T-cell (primary cell): ENCODE measurements at regions of chr2 and their contacts with region 1.

Region 1: GRCh38 chr2:189762551-189763298 is at the start of gene OSGEPL1:
- DNase-seq: peak; percentile 81 to 96 (median 92)
- ATAC-seq: peak; percentile 93 to 95 (median 94)
- H3K4me3 ChIP-seq: peak within 1 kb of the TSS; percentile 94 to 98
- H3K4me3 Mint-ChIP-seq: peak within 1 kb of the TSS; percentile 92 to 98 (median 93)
- H3K27ac ChIP-seq: peak within 1 kb of the TSS; percentile 95
- H3K27ac Mint-ChIP-seq: peak within 1 kb of the TSS; percentile 96 to 98
- H3K4me1 ChIP-seq: peaks cover 5 to 10% of the 10 kb centered on the region in 2 experiments
- H3K4me1 Mint-ChIP-seq: peaks cover 11 to 13% (median 11%) of the 10 kb centered on the region in 3 donors
- H3K27me3 ChIP-seq: no peaks in the 10 kb centered on the region
- H3K27me3 Mint-ChIP-seq: no peaks in the 10 kb centered on the region
- total RNA-seq, gene OSGEPL1: 5.5 to 15.3 (median 13.9) TPM

Region 2: DNA sequence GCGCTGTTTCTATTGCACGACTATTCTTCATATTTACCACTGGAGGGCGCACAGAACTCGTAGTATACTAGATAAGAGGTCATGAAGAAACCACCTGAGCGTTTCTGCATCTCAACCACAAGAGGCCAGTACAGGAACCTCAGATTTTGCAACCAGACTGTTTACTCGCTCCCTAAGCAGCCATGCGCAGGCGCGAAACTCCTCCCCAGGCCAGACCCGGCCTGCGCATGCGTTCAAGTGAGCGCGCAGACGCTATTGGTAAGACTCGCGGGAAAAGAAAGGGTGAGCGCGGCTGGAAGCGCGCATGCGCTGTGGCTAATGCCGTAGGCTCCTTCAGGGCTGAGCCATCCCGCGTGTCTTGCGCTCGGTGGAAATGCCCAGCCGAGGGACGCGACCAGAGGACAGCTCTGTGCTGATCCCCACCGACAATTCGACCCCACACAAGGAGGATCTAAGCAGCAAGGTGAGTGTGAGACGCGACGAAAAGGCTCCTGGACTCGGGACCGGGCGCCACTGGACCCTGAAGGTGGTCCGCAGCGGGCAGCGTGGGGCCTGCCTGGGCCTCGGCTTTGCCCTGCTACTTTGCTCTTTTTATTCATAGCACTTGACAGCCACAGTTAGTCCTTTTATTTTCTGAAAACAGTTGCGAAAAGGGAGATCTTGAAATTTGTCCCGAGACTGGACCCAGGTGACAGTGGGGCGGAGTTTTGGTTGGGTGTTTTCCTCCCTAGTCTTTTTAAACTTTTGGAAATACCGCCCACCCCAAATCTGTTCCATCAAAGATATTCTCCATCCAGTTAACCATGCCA is 101.4 kb before region 1 on chr2 and contains the start of gene ASNSD1:
- CTCF ChIA-PET with region 1: interaction called, 7 to 41 read pairs
- POLR2A ChIA-PET with region 1: interaction called in 1 of 2 experiments, 8 read pairs
- DNase-seq: peak; percentile 94 to 100 (median 99)
- ATAC-seq: peak; percentile 87 to 93 (median 88)
- H3K4me3 ChIP-seq: peak within 1 kb of the TSS; percentile 93 to 98
- H3K4me3 Mint-ChIP-seq: no peak within 1 kb of the TSS
- H3K27ac ChIP-seq: peak within 1 kb of the TSS; percentile 92
- H3K27ac Mint-ChIP-seq: no peak within 1 kb of the TSS
- H3K4me1 ChIP-seq: peaks cover 27 to 40% of the 10 kb centered on the region in 2 experiments
- H3K4me1 Mint-ChIP-seq: peaks cover 54 to 62% (median 55%) of the 10 kb centered on the region in 3 donors
- H3K27me3 ChIP-seq: no peaks in the 10 kb centered on the region
- H3K27me3 Mint-ChIP-seq: no peaks in the 10 kb centered on the region
- total RNA-seq, gene ASNSD1: 31.7 to 43.8 (median 35.9) TPM

Region 3: DNA sequence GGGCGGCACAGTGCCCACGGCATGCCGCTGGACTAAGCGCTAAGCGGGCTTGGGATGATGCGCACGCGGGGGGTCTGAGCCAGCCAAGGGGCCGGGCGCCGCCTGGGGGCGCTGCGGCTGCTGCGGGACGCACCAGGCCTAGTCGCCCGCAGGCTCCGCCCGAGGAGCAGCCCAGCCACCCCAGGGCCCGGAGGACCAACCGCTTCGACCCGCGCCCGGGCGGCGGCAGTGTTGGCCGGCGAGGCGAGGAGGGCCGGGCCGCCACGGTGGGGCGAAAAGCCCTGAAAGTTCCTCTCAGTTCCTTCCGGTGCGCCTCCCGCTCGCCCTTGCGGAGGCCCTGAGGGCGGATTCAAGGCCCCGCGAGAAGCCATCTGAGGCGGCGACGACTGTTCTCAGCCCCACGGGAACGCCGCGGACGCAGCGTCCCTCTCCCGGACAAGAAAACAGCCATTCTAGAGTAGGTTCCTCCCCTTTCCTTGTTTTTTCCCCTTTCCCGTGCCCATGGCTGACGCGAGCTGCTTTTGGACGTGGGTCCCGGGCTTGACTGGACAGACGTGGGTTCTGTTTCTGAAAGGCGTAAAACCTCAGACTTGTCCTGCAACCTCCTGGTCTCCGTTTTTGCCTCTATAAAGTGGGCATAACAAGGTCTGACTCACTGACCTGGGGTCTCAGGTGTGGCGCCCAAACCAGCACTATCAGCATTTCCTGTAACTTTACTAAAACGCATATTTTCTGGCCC is 88.2 kb before region 1 on chr2 and contains the start of gene ANKAR:
- CTCF ChIA-PET with region 1: interaction called, 6 to 36 read pairs
- POLR2A ChIA-PET with region 1: interaction called in 1 of 2 experiments, 8 read pairs
- DNase-seq: peak; percentile 54 to 89 (median 72)
- ATAC-seq: peak; percentile 95 to 97 (median 96)
- H3K4me3 ChIP-seq: peak within 1 kb of the TSS; percentile 67 to 96
- H3K4me3 Mint-ChIP-seq: peak within 1 kb of the TSS; percentile 91 to 95 (median 93)
- H3K27ac ChIP-seq: peak within 1 kb of the TSS; percentile 88
- H3K27ac Mint-ChIP-seq: peak within 1 kb of the TSS; percentile 97 to 99
- H3K4me1 ChIP-seq: peaks cover 3 to 21% of the 10 kb centered on the region in 2 experiments
- H3K4me1 Mint-ChIP-seq: peaks cover 30 to 44% (median 41%) of the 10 kb centered on the region in 3 donors
- H3K27me3 ChIP-seq: no peaks in the 10 kb centered on the region
- H3K27me3 Mint-ChIP-seq: no peaks in the 10 kb centered on the region
- total RNA-seq, gene ANKAR: 12.5 to 14.9 (median 12.9) TPM

Region 4: DNA sequence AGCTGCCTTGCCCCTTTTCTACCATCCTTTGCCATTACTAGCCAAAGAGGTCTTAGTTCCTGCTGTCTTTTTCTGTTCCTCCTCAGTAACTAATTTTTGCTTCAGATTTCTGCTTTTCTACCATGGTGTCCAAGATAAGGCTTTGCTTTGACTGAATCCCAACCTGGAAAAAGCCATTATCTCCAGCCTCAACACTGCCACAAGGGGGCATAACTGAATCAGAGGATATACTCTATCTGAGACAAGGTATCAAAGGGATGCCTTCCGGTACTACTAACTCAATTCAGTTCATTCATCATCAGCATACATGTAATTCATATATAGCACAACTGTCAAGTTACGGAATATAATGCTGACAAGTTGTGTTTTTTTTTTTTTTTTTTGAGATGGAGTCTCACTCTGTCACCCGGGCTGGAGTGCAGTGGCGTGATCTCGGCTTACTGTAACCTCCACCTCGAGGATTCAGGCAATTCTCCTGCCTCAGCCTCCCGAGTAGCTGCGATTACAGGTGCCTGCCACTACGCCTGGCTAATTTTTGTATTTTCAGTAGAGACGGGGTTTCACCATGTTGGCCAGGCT is 11.6 kb before region 1 on chr2:
- CTCF ChIA-PET with region 1: interaction called, 8 to 27 read pairs
- POLR2A ChIA-PET with region 1: interaction called in 1 of 2 experiments, 3 read pairs
- DNase-seq: peak in 25 of 35 experiments; percentile 4 to 66 (median 28)
- ATAC-seq: peak; percentile 60 to 85 (median 66)
- H3K4me3 ChIP-seq: no peak overlapping the region
- H3K4me3 Mint-ChIP-seq: no peak overlapping the region
- H3K27ac ChIP-seq: no peak overlapping the region
- H3K27ac Mint-ChIP-seq: no peak overlapping the region
- H3K4me1 ChIP-seq: no peaks in the 10 kb centered on the region
- H3K4me1 Mint-ChIP-seq: peaks cover 0 to 3% (median 1%) of the 10 kb centered on the region in 3 donors
- H3K27me3 ChIP-seq: no peaks in the 10 kb centered on the region
- H3K27me3 Mint-ChIP-seq: no peaks in the 10 kb centered on the region

Region 5: DNA sequence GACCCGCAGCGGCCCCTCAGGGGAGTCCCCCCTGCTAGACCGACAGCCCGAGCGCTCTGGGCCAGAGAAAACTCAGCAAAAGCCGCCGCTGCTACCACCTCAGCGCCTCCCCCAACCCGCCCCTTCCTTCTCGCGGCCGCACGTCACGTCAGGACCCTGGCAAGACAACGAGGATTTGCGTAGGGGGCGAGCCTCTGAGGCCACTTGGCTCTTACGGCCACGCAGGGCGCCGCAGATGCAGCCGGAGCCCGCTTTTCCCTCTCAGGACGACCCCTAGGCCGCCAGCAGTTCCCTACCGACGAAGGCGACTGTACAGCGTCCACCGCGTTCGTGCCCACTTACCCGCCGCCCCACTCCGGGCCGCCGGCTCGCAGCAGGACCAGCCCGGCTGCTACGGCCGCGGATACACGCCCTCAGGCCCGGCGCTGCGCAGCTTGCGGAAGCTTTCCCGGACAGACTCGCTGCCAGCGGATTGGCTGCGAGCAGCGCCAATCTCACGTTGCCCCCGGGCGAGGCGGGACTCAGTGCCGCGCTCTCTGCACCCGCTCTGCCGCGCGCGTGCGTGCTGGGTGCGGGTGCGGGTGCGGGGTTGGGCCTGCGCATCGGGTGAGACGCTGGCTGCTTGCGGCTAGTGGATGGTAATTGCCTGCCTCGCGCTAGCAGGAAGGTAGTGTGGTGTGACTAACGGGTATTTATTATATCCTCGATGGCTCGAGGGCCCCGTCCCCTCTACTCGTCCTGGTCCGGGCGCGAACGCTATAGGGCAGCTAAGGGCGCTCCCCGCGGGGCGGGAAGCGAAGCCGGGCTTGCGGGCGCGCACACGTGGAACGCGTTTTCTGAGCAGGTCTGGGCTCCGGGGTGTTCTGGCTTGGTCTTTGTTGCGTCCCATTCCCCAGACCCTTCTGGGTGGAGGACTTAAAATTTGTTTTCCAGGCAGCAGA is 21.5 kb after region 1 on chr2 and contains the starts of genes ORMDL1 and PMS1:
- CTCF ChIA-PET with region 1: interaction called, 8 to 29 read pairs
- POLR2A ChIA-PET with region 1: interaction called, 5 to 15 read pairs
- DNase-seq: peak; percentile 89 to 97 (median 93)
- ATAC-seq: peak; percentile 92 to 95 (median 93)
- H3K4me3 ChIP-seq: peak within 1 kb of the TSS; percentile 74 to 81
- H3K4me3 Mint-ChIP-seq: peak within 1 kb of the TSS; percentile 92 to 93 (median 92)
- H3K27ac ChIP-seq: peak within 1 kb of the TSS; percentile 94
- H3K27ac Mint-ChIP-seq: peak within 1 kb of the TSS; percentile 90 to 93
- H3K4me1 ChIP-seq: peaks cover 16 to 21% of the 10 kb centered on the region in 2 experiments
- H3K4me1 Mint-ChIP-seq: peaks cover 57 to 67% (median 65%) of the 10 kb centered on the region in 3 donors
- H3K27me3 ChIP-seq: no peaks in the 10 kb centered on the region
- H3K27me3 Mint-ChIP-seq: no peaks in the 10 kb centered on the region
- total RNA-seq, gene ORMDL1: 121 to 161 (median 146) TPM
- total RNA-seq, gene PMS1: 23.1 to 30.9 (median 24.8) TPM

Region 6: DNA sequence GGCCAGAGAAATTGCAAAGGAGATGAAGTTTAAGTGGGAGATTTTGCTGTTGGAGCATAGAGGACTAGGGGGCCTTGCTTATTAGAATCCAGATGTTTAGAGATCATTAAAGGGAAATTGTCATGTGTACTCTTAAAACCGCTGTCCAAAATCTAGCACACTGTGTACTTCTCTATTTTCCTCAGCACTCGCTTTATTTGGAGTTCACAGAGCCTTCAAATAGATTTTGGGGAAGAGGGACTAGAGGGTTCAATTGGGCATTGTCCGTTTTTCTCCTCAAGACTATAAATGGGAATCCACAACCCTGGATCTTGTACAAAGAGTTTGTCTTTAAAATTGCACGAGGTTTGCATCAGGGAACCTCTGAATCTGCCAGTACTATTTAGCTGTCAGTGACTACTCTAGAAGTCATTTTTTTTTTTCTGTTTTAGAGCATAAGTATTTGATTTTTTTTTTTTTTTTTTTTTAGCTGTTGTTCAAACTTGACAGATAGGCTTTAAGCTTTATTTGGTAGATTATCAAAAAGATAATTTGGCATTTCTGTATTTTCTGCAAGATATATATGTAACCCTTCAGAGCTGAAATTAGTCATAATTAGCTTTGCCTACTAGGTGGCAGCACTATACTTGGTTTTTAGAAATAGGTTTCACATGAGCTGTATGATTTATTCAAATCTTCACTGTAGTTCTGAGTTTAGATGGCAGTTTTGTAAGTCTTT is 35.7 kb after region 1 on chr2:
- CTCF ChIA-PET with region 1: interaction called in 1 of 2 experiments, 10 read pairs
- POLR2A ChIA-PET with region 1: interaction called in 1 of 2 experiments, 7 read pairs
- DNase-seq: peak in 1 of 35 experiments; percentile 21
- ATAC-seq: no peak
- H3K4me3 ChIP-seq: no peak overlapping the region
- H3K4me3 Mint-ChIP-seq: no peak overlapping the region
- H3K27ac ChIP-seq: no peak overlapping the region
- H3K27ac Mint-ChIP-seq: no peak overlapping the region
- H3K4me1 ChIP-seq: no peaks in the 10 kb centered on the region
- H3K4me1 Mint-ChIP-seq: peaks cover 0 to 5% (median 4%) of the 10 kb centered on the region in 3 donors
- H3K27me3 ChIP-seq: no peaks in the 10 kb centered on the region
- H3K27me3 Mint-ChIP-seq: no peaks in the 10 kb centered on the region

Region 7: DNA sequence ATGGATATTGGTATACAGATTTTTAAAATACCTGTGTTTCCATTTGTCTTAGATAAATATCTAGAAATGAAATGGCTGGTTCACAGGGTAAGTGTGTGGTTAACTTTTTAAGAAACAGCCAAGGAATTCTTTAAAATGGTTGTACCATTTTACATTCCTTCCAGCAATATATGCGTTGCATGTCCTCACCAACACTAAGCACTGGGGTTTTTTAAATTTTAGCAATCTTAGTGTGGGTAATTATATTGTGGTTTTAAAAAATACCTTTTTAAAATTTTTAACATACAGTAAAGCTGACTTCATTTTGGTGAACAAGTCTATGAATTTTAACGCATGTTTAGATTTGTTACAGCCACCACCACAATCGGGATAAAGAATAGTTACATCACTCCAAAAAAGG is 427.8 kb after region 1 on chr2:
- CTCF ChIA-PET with region 1: no interaction called
- POLR2A ChIA-PET with region 1: no interaction called
- DNase-seq: no peak
- ATAC-seq: no peak
- H3K4me3 ChIP-seq: no peak overlapping the region
- H3K4me3 Mint-ChIP-seq: no peak overlapping the region
- H3K27ac ChIP-seq: no peak overlapping the region
- H3K27ac Mint-ChIP-seq: no peak overlapping the region
- H3K4me1 ChIP-seq: no peaks in the 10 kb centered on the region
- H3K4me1 Mint-ChIP-seq: no peaks in the 10 kb centered on the region
- H3K27me3 ChIP-seq: no peaks in the 10 kb centered on the region
- H3K27me3 Mint-ChIP-seq: no peaks in the 10 kb centered on the region